ENCODE measurements at regions of chr14 and their contacts with region 1.

Region 1: GRCh38 chr14:60561845-60562746 is 53.1 kb downstream of the SIX6 start:
- DNase-seq: peak in 1 of 2 donors; percentile 25
- ATAC-seq: peak; percentile 60

Region 2: GRCh38 chr14:60349663-60350365 is 212.3 kb before region 1 on chr14:
- intact Hi-C with region 1: loop called in 1 of 2 experiments (anchors 10 kb)
- DNase-seq: peak in 1 of 2 donors; percentile 16
- ATAC-seq: peak; percentile 59